Dorsolateral prefrontal cortex (tissue), 120 donors: ENCODE measurements at regions of chr7 and their contacts with region 1.

Region 1: DNA sequence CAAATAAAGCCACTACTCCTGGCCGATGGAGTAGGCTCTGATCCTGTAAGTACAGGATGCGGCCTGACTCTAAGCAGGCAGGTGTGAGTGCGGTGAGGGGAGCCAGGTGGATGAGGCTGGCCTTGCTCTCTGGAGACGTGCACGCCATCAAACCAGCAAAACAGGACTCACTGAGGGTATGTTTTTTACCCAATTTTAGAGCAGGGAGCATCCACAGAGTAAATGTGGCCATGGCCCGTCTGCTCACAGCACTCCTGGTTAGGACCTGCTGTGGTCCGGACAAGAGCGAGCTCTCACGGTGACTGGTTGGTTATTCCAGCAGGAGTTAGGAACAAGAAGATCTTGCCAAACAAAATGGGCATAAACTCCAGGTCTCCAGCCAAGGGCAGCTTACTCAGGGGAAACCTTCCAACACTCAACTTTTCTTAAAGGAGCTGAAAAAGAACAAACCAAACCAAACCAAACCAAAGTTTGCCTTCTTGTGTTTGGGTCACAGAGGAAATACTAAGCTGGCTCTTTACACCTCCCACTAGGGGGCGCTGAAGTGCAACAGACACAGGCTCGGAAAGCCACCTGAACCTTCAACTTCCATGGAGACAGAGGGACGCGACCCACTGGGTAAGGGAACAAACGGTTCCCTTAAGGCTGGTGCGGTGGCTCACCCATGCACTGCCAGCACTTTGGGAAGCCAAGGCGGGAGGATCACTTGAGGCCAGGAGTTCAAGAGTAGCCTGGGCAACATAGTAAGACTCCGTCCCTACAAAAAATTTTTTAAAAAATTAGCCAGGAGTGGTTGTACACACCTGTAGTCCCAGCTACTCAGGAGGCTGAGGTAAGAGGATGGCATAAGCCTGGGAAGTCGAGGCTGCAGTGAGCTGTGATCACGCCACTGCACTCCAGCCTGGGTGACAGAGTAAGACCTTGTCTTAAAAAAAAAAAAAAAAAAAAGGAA is 122.4 kb downstream of the CLEC2L start:
- DNase-seq: peak; percentile 66 to 89 (median 86)
- H3K4me3 ChIP-seq: peak overlapping the region in 3 of 59 donors; percentile 13 to 26 (median 16)
- H3K27ac ChIP-seq: peak overlapping the region in 58 of 59 donors; percentile 35 to 98 (median 92)
- H3K27me3 ChIP-seq: no peaks in the 10 kb centered on the region
- CTCF ChIP-seq: peak; percentile 80 to 97 (median 91)

Region 2: DNA sequence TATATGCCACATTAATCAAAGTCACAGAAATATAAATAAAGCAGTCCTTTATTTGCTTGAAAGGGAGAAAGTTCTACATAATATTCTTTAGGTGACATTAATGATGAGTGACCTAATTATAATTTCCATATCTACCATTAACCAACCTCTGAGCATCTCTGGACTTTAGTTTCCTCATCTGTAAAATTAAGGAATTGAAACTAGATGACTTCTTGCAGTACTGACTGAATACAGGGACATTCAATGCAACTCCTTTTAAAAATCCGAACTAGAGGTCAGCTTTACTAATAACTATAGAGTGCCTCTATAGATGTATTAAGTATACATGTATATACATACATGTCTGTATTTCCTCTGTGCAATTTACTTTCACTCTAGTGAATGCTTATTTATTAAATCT is 300.8 kb before region 1 on chr7:
- intact Hi-C with region 1: no loop called
- DNase-seq: no peak
- H3K4me3 ChIP-seq: no peak overlapping the region
- H3K27ac ChIP-seq: no peak overlapping the region
- H3K27me3 ChIP-seq: no peaks in the 10 kb centered on the region
- CTCF ChIP-seq: no peak

Region 3: DNA sequence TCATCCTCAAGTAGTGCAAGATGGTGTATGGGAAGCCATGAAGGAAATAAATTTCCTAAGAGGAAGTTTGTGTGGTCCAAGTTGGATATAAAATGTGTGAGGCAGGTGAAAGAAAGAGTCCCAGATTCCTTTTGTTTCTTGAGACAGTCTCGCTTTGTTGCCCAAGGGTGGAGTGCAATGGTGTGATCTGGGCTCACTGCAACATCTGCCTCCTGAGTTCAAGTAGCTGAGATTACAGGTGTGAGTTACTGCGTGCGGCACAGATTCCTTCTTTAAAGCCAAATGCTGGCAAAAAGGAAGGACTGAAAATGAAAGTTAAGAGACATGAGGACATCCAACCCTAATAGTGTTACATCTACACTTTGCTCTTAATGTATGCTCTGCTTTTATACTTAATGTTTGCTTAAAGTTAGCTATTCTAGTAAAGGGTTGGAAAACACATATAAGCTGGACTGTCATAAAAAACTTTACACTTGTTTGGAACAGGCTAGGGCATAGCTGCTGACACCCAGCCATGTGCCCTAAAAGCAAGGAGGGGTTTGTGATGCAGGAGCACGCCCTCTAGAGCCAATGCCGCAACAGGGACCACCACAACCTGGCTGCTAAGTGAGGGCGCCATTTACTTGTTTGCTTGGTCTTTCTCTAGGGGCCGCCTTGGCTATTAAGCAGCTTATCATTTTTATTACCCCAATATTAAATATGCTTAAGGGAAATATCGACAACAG is 87.8 kb before region 1 on chr7:
- intact Hi-C with region 1: no loop called
- DNase-seq: no peak
- H3K4me3 ChIP-seq: no peak overlapping the region
- H3K27ac ChIP-seq: no peak overlapping the region
- H3K27me3 ChIP-seq: no peaks in the 10 kb centered on the region
- CTCF ChIP-seq: no peak

Region 4: GRCh38 chr7:139737221-139738100 is 91.6 kb after region 1 on chr7:
- intact Hi-C with region 1: loop called in 1 of 2 experiments (anchors 5 kb)
- DNase-seq: no peak
- H3K4me3 ChIP-seq: peak overlapping the region in 2 of 59 donors; percentile 10 to 25
- H3K27ac ChIP-seq: peak overlapping the region; percentile 41 to 99 (median 94)
- H3K27me3 ChIP-seq: no peaks in the 10 kb centered on the region
- CTCF ChIP-seq: no peak

Region 5: GRCh38 chr7:139869886-139870285 is 224.0 kb after region 1 on chr7:
- intact Hi-C with region 1: no loop called
- DNase-seq: no peak
- H3K4me3 ChIP-seq: no peak overlapping the region
- H3K27ac ChIP-seq: no peak overlapping the region
- H3K27me3 ChIP-seq: no peaks in the 10 kb centered on the region
- CTCF ChIP-seq: no peak

Region 6: GRCh38 chr7:139995017-139995931 is 349.4 kb after region 1 on chr7:
- intact Hi-C with region 1: loop called in 1 of 2 experiments (anchors 2 kb)
- DNase-seq: peak; percentile 15 to 90 (median 84)
- H3K4me3 ChIP-seq: no peak overlapping the region
- H3K27ac ChIP-seq: peak overlapping the region in 58 of 59 donors; percentile 67 to 97 (median 92)
- H3K27me3 ChIP-seq: no peaks in the 10 kb centered on the region
- CTCF ChIP-seq: peak in 22 of 56 donors; percentile 9 to 50 (median 20)